Panc1 (cell line): ENCODE measurements at regions of chr9 and their contacts with region 1.

Region 1: GRCh38 chr9:71604197-71605063 is 163.9 kb downstream of the CEMIP2 start:
- DNase-seq: peak; percentile 17
- ATAC-seq: peak; percentile 84
- H3K4me3 ChIP-seq: no peak overlapping the region
- H3K27ac ChIP-seq: no peak overlapping the region
- H3K4me1 ChIP-seq: no peaks in the 10 kb centered on the region
- H3K27me3 ChIP-seq: no peaks in the 10 kb centered on the region
- CTCF ChIP-seq: peak; percentile 75

Region 2: DNA sequence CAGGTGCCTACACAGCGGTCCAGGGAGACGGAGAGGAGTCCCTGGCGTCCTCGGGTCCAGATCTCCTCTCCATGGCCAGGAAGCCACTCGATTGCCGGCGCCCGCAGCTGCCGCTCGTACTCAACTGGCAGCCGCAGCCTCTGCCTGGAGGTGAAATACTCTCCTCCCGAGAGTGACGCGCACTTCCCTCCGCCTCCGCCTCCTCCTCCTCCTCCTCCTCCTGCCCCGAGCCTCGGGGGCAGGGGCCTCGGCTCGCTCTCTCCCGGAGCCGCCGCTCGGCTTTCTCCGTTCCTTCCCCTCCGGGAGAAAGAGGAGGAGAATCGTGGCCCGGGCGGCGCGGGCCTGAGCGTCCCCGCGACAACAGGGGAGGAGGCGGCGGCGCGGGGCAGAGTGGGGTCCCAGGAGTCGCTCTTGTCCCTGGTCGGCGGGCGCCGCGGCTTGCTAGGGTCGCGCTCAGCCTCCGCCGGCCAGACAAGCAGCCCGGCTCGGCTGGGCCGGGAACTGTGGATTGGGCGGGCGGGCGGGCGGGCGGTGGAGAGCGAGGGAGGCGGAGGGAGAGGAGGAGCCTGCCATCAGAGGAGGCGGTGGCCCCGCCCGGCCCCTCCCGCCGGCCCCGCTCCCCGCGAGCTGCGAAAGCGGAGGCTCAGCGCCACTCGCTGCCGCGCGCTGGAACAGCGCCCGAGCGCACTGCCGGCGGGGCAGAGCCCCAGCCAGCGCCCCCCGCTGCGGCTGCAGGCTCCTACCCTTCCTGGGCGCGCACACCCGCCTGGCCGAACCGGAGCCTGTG is 164.2 kb after region 1 on chr9 and contains the start of gene CEMIP2:
- CTCF ChIA-PET with region 1: no interaction called
- POLR2A ChIA-PET with region 1: no interaction called
- in situ Hi-C with region 1: no loop called
- intact Hi-C with region 1: loop called (anchors 10 kb)
- DNase-seq: no peak
- ATAC-seq: peak; percentile 92
- H3K4me3 ChIP-seq: peak within 1 kb of the TSS; percentile 74 to 93
- H3K27ac ChIP-seq: peak within 1 kb of the TSS; percentile 71
- H3K4me1 ChIP-seq: peaks cover 14% of the 10 kb centered on the region
- H3K27me3 ChIP-seq: no peaks in the 10 kb centered on the region
- CTCF ChIP-seq: peak; percentile 70
- total RNA-seq, gene CEMIP2: 14.8 TPM